Cardiac septum (tissue), 1 donor: ENCODE measurements at regions of chr9 and their contacts with region 1.

Region 1: DNA sequence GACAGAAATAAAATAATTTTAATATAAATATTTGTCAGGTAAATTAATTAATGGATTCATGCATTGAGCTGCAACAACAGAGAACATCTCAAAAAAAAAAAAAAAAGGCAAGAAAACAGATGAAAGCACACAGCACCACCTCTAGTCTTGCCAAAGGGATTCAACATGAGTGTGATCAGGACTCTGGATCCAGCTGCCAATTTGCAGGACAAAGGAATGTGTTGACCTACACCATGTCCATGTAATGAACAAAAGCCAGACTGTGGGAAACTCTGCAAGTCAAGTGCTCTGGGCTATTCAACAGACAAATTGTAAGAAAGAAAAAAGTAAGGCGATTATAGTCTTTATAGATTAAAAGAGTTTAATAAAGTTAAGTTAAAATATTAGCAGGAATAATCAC is 769.3 kb downstream of the TLR4 start:
- DNase-seq: no peak

Region 2: GRCh38 chr9:118170032-118170955 is 303.2 kb before region 1 on chr9:
- intact Hi-C with region 1: loop called (anchors 5 kb)
- DNase-seq: no peak

Region 3: DNA sequence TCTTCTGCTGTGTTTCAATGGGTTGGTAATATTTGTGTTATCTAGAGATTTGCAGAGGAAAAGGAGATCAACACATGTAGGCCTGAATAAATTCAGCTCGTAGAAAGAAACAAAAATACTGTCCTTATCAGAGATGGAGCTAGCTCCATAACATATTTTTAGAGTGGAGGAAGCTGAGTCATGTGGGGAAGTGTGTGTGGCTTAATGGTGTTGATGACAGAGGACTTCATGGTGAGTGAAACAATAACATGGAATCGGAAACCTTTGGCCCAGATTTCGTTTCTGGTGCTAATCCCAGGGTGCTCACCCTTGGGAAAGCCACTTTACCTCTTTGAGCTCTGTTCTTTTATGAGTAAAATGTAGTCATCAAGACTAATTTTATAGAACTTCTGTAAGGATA is 55.7 kb after region 1 on chr9:
- intact Hi-C with region 1: no loop called
- DNase-seq: no peak

Region 4: GRCh38 chr9:118618091-118618490 is 144.6 kb after region 1 on chr9:
- intact Hi-C with region 1: no loop called
- DNase-seq: no peak